GM12878 (cell line): ENCODE measurements at regions of chr6 and their contacts with region 1.

Region 1: DNA sequence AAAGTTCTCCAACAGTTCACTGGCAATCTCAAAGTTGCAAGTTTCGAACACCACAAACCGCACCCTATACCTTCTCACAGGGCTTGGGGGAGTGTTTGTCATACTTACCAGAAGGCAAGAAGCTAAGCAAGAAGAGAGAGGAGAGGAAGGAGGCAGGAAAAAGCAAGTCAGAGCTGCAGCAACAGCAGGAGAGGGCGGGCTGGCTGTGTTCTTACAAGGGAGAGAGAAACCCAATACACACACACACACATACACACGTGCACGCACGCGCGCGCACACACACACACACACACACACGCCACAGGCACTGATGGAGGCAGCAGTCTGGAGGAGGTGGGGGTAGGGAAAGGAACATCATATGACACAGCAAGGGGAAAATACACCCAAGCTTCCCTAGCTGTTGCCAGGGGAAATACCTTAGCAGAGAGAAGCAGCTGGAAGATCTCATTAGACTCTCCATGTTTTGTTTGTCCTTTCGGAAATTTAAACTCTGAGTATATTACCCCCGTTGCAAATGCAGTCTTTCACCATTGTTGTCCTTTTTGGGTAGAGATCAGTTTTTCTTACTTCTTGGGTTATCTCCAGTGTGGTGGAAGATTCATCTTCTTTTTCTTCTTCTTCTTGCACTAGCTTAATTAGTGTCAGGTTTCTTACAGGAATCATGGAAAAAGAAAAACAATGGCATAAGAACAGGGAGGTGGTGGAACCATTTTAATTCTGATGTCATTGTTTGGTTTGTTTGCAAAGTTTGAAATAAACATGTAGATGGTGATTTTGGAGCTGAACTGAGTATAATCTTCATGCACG is at the start of gene TXLNB:
- DNase-seq: peak; percentile 83
- ATAC-seq: peak; percentile 88
- H3K4me3 ChIP-seq: peak within 1 kb of the TSS; percentile 40
- H3K27ac ChIP-seq: peak within 1 kb of the TSS; percentile 88
- H3K4me1 ChIP-seq: peaks cover 35% of the 10 kb centered on the region
- H3K27me3 ChIP-seq: no peaks in the 10 kb centered on the region
- CTCF ChIP-seq: no peak
- EP300 ChIP-seq: peak; percentile 46 to 81; a peak in 2 of 4 replicates
- POLR2A ChIP-seq: 0 out of 2 replicates have a peak, but pooled peaks have one; percentile 51
- RAD21 ChIP-seq: no peak; the same call in 1 of the 2 replicates
- polyA plus RNA-seq, gene TXLNB: 0.07 to 0.10 TPM

Region 2: GRCh38 chr6:139037490-139037889 is 254.5 kb before region 1 on chr6:
- CTCF ChIA-PET with region 1: no interaction called
- POLR2A ChIA-PET with region 1: no interaction called
- RAD21 ChIA-PET with region 1: no interaction called
- SMC1A ChIA-PET with region 1: no interaction called
- in situ Hi-C with region 1: no loop called
- intact Hi-C with region 1: no loop called
- DNase-seq: no peak
- ATAC-seq: no peak
- H3K4me3 ChIP-seq: no peak overlapping the region
- H3K27ac ChIP-seq: no peak overlapping the region
- H3K4me1 ChIP-seq: no peaks in the 10 kb centered on the region
- H3K27me3 ChIP-seq: no peaks in the 10 kb centered on the region
- CTCF ChIP-seq: no peak
- EP300 ChIP-seq: no peak
- POLR2A ChIP-seq: no peak
- RAD21 ChIP-seq: no peak

Region 3: DNA sequence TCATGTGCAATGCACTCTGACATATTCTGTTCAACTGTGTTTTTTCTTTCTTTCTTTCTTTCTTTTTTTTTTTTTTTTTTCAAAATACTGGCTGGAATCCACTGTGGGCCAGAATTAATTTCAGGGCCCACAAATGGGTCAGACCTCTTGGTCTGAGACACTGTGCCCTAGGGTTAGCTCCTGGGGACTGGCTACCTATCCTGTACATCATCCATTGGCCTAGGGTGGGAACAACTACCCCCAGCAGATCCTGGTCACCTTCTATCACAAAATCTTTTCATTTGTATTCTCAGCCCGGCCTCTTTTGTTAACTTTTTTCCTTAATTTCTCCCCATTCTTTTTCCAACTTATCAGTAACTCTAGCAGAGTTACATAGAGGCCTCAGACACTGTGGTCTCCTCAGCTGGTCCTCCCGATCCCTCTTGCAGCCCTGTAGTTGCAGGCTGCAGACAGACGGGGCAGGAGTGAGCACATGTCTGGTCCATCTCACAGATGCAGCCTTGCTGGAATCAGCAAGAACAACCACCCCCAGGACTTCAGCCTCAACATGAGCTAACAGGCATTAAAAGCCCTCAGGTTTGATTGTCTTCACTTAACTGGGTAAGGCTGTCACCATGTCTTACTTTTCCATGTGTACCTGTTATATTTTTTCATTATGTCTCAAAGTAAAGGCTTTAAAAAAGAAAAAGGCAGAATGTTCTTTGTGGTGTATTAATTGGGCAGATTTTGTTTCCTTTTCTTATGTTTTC is 41.5 kb before region 1 on chr6:
- CTCF ChIA-PET with region 1: interaction called, 5 read pairs
- POLR2A ChIA-PET with region 1: interaction called, 9 read pairs
- RAD21 ChIA-PET with region 1: interaction called, 3 read pairs
- SMC1A ChIA-PET with region 1: interaction called, 4 read pairs
- in situ Hi-C with region 1: no loop called
- intact Hi-C with region 1: loop called (anchors 1 kb)
- DNase-seq: no peak
- ATAC-seq: peak; percentile 99
- H3K4me3 ChIP-seq: no peak overlapping the region
- H3K27ac ChIP-seq: no peak overlapping the region; the same call in 1 of the 2 replicates
- H3K4me1 ChIP-seq: peaks cover 13% of the 10 kb centered on the region
- H3K27me3 ChIP-seq: no peaks in the 10 kb centered on the region
- CTCF ChIP-seq: peak; percentile 63 to 89 (median 79)
- EP300 ChIP-seq: no peak
- POLR2A ChIP-seq: no peak
- RAD21 ChIP-seq: peak; percentile 59

Region 4: DNA sequence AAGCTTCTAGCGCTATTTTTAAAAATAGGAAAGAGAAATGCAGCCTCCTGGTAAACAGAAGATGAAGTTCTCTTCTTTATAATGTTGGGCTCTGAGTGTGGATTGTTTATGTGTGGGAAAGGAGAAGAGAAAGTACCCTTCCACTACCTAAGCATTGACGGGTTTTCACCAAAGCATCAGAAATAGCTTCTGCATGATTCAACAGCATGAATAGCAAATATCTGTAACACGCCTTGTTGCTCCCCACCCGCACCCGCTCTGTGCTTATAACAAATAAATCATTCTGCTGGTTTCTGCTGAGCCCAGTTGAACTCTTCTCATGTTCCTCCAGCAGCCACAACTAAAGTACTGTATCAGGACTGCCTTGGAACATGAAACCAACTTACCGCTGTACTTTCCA is 21.0 kb before region 1 on chr6:
- CTCF ChIA-PET with region 1: interaction called, 21 read pairs
- POLR2A ChIA-PET with region 1: interaction called, 10 read pairs
- RAD21 ChIA-PET with region 1: interaction called, 39 read pairs
- SMC1A ChIA-PET with region 1: interaction called, 52 read pairs
- in situ Hi-C with region 1: no loop called
- intact Hi-C with region 1: no loop called
- DNase-seq: no peak
- ATAC-seq: peak; percentile 92
- H3K4me3 ChIP-seq: 0 out of 2 replicates have a peak overlapping the region, but pooled peaks have one; percentile 18
- H3K27ac ChIP-seq: peak overlapping the region; percentile 14; the same call in 1 of the 2 replicates
- H3K4me1 ChIP-seq: peaks cover 6% of the 10 kb centered on the region
- H3K27me3 ChIP-seq: no peaks in the 10 kb centered on the region
- CTCF ChIP-seq: no peak
- EP300 ChIP-seq: 0 out of 4 replicates have a peak, but pooled peaks of 1 of the 2 experiments have one; percentile 31
- POLR2A ChIP-seq: no peak
- RAD21 ChIP-seq: no peak

Region 5: GRCh38 chr6:139323511-139324300 is 31.7 kb after region 1 on chr6:
- CTCF ChIA-PET with region 1: interaction called, 15 read pairs
- POLR2A ChIA-PET with region 1: interaction called, 25 read pairs
- RAD21 ChIA-PET with region 1: interaction called, 42 read pairs
- SMC1A ChIA-PET with region 1: interaction called, 71 read pairs
- in situ Hi-C with region 1: no loop called
- intact Hi-C with region 1: loop called (anchors 1 kb)
- DNase-seq: no peak
- ATAC-seq: peak; percentile 42
- H3K4me3 ChIP-seq: no peak overlapping the region
- H3K27ac ChIP-seq: peak overlapping the region; percentile 34; the same call in 1 of the 2 replicates
- H3K4me1 ChIP-seq: peaks cover 27% of the 10 kb centered on the region
- H3K27me3 ChIP-seq: no peaks in the 10 kb centered on the region
- CTCF ChIP-seq: no peak
- EP300 ChIP-seq: 0 out of 4 replicates have a peak, but pooled peaks of 1 of the 2 experiments have one; percentile 38
- POLR2A ChIP-seq: no peak
- RAD21 ChIP-seq: no peak